Pancreas (tissue), 10 donors: ENCODE measurements at regions of chr17 and their contacts with region 1.

Region 1: DNA sequence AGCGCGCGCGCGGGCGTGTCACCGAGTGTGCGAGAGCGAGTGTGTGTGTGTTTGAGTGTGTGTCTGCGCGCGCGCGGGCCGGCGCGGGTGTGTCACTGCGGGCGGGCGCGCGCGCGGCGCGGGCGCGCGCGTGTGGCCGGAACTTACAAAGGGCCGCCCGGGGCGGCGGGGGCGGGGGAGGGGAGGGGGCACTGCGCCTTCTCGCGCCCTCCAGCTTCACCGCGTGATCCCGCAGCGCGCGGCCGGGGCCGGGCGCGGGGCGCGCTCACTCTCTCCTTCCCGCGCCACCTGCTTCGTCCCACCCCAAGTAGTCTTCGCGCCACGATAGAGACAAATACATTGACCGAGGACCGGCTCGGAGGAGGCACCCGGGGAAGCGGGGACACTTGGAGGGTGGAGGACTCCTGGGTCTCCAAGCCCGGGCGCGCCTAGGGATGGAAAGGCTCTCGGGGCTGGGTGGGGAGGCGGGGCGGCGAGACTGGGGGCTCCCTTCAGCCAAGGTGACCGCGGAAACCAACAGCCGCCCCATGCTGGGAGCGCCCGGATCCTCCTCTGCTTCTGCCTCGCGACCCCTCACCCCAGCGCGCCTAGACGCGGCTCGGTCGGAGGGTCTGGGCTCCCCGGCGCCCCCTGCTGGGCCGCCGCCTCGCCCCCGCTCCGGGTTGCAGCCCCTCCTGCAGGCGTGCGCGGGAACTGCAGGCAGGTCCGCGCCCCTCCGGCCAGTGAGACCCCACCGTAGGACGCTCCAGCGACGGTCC is at the start of gene SRCIN1:
- DNase-seq: peak; percentile 54 to 89 (median 74)
- ATAC-seq: peak; percentile 65 to 77 (median 76)
- H3K4me3 ChIP-seq: peak within 1 kb of the TSS; percentile 32 to 71 (median 59)
- H3K27ac ChIP-seq: peak within 1 kb of the TSS; percentile 61 to 73 (median 66)
- H3K4me1 ChIP-seq: peaks cover 0 to 5% (median 4%) of the 10 kb centered on the region in 3 donors
- H3K27me3 ChIP-seq: no peaks in the 10 kb centered on the region
- CTCF ChIP-seq: peak; percentile 94 to 99 (median 97)
- total RNA-seq, gene SRCIN1: 5.8 to 9.3 (median 8.2) TPM

Region 2: GRCh38 chr17:38509008-38509771 is 96.9 kb before region 1 on chr17:
- intact Hi-C with region 1: no loop called
- DNase-seq: peak; percentile 50 to 87 (median 76)
- ATAC-seq: peak; percentile 60 to 85 (median 79)
- H3K4me3 ChIP-seq: no peak overlapping the region
- H3K27ac ChIP-seq: no peak overlapping the region
- H3K4me1 ChIP-seq: no peaks in the 10 kb centered on the region
- H3K27me3 ChIP-seq: peaks cover 0 to 4% (median 0%) of the 10 kb centered on the region in 4 donors
- CTCF ChIP-seq: peak; percentile 23 to 58 (median 44)

Region 3: DNA sequence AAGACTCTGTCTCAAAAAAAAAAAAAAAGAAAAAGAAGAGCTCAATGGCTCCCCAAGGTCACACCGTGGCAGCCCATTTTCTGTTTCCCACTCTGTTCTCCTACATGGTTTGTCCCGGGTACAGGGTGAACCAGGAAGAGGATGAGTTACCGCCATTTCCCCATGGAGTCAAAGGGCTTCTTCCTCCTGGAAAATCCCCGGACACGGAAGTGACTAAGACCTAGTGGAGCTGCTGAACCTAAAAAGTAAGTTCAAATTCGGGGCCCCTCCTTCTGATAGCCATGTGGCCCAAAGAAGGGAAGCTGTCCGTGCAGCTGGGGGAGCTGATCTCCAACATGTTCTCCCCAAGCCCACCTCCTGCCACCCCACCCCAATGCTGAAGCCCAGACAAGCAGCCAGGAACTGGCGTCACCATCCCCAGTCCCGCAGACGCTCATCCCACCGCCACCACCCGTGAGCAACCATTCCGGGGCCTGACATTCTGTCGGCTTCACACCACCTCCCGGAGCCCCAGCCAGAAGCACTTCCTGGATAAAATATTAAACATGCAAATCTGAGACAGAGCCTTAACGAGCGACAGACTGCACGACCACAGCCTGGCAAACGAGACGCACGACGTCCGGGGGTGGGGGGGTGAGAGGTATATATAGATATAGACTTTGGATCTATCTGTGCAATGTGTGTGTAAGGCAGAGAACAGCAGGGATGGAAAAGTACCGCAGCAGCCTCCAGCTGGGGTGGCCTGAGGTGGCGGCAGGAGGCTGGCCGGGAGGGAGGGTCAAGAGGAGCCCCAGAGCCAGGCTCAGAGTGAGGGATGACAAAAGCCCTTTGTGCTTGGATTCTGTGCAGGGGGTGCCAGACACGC is 51.1 kb after region 1 on chr17:
- intact Hi-C with region 1: loop called in 1 of 3 experiments (anchors 10 kb)
- DNase-seq: peak in 2 of 6 donors; percentile 41 to 50
- ATAC-seq: peak; percentile 54 to 80 (median 66)
- H3K4me3 ChIP-seq: no peak overlapping the region
- H3K27ac ChIP-seq: peak overlapping the region; percentile 26 to 82 (median 67)
- H3K4me1 ChIP-seq: peaks cover 0 to 2% (median 0%) of the 10 kb centered on the region in 3 donors
- H3K27me3 ChIP-seq: no peaks in the 10 kb centered on the region
- CTCF ChIP-seq: no peak